T-cell (primary cell): ENCODE measurements at regions of chr17 and their contacts with region 1.

Region 1: GRCh38 chr17:28974451-28974850 is 23.1 kb upstream of the PHF12 start:
- DNase-seq: no peak
- ATAC-seq: no peak
- H3K4me3 ChIP-seq: no peak overlapping the region
- H3K4me3 Mint-ChIP-seq: no peak overlapping the region
- H3K27ac ChIP-seq: no peak overlapping the region
- H3K27ac Mint-ChIP-seq: no peak overlapping the region
- H3K4me1 ChIP-seq: no peaks in the 10 kb centered on the region
- H3K4me1 Mint-ChIP-seq: no peaks in the 10 kb centered on the region
- H3K27me3 ChIP-seq: peaks cover 0 to 15% of the 10 kb centered on the region in 2 experiments
- H3K27me3 Mint-ChIP-seq: peaks cover 0 to 3% of the 10 kb centered on the region in 2 donors

Region 2: GRCh38 chr17:28951428-28951990 is 22.9 kb before region 1 on chr17 and contains the start of gene PHF12:
- CTCF ChIA-PET with region 1: no interaction called
- POLR2A ChIA-PET with region 1: no interaction called
- DNase-seq: peak; percentile 98 to 100 (median 100)
- ATAC-seq: peak; percentile 62 to 70 (median 68)
- H3K4me3 ChIP-seq: peak within 1 kb of the TSS; percentile 92 to 98
- H3K4me3 Mint-ChIP-seq: peak within 1 kb of the TSS in 2 of 3 donors; percentile 94 to 95
- H3K27ac ChIP-seq: peak within 1 kb of the TSS; percentile 99
- H3K27ac Mint-ChIP-seq: peak within 1 kb of the TSS; percentile 92 to 96
- H3K4me1 ChIP-seq: peaks cover 23 to 42% of the 10 kb centered on the region in 2 experiments
- H3K4me1 Mint-ChIP-seq: peaks cover 23 to 26% (median 25%) of the 10 kb centered on the region in 3 donors
- H3K27me3 ChIP-seq: no peaks in the 10 kb centered on the region
- H3K27me3 Mint-ChIP-seq: no peaks in the 10 kb centered on the region
- total RNA-seq, gene PHF12: 121 to 176 (median 123) TPM

Region 3: GRCh38 chr17:29059281-29059680 is 84.8 kb after region 1 on chr17:
- CTCF ChIA-PET with region 1: interaction called in 1 of 2 experiments, 10 read pairs
- POLR2A ChIA-PET with region 1: no interaction called
- DNase-seq: no peak
- ATAC-seq: no peak
- H3K4me3 ChIP-seq: no peak overlapping the region
- H3K4me3 Mint-ChIP-seq: no peak overlapping the region
- H3K27ac ChIP-seq: no peak overlapping the region
- H3K27ac Mint-ChIP-seq: no peak overlapping the region
- H3K4me1 ChIP-seq: no peaks in the 10 kb centered on the region
- H3K4me1 Mint-ChIP-seq: no peaks in the 10 kb centered on the region
- H3K27me3 ChIP-seq: peaks cover 0 to 8% of the 10 kb centered on the region in 2 experiments
- H3K27me3 Mint-ChIP-seq: no peaks in the 10 kb centered on the region